Dendritic cell treated with granulocyte-macrophage colony-stimulating factor and Interleukin-4, amounts not matched to agents 40 ng/mL and 50 ng/mL, for 4 days (primary cell): ENCODE measurements at regions of chr10 and their contacts with region 1.

Region 1: GRCh38 chr10:75111367-75111906 is at the start of gene SAMD8:
- H3K4me3 Mint-ChIP-seq: peak within 1 kb of the TSS; percentile 97
- H3K27ac Mint-ChIP-seq: peak within 1 kb of the TSS; percentile 96
- H3K4me1 Mint-ChIP-seq: peaks cover 57% of the 10 kb centered on the region
- H3K27me3 Mint-ChIP-seq: no peaks in the 10 kb centered on the region

Region 2: GRCh38 chr10:74826142-74827044 is 285.0 kb before region 1 on chr10 and contains the start of gene KAT6B:
- intact Hi-C with region 1: loop called (anchors 1 kb)
- H3K4me3 Mint-ChIP-seq: peak within 1 kb of the TSS; percentile 92
- H3K27ac Mint-ChIP-seq: peak within 1 kb of the TSS; percentile 91
- H3K4me1 Mint-ChIP-seq: peaks cover 41% of the 10 kb centered on the region
- H3K27me3 Mint-ChIP-seq: peaks cover 8% of the 10 kb centered on the region

Region 3: GRCh38 chr10:75210282-75211006 is 99.0 kb after region 1 on chr10 and contains the start of gene VDAC2:
- intact Hi-C with region 1: loop called (anchors 1 kb)
- H3K4me3 Mint-ChIP-seq: peak within 1 kb of the TSS; percentile 97
- H3K27ac Mint-ChIP-seq: peak within 1 kb of the TSS; percentile 99
- H3K4me1 Mint-ChIP-seq: peaks cover 27% of the 10 kb centered on the region
- H3K27me3 Mint-ChIP-seq: no peaks in the 10 kb centered on the region

Region 4: GRCh38 chr10:75235375-75236177 is 124.1 kb after region 1 on chr10 and contains the start of gene COMTD1:
- intact Hi-C with region 1: loop called (anchors 2 kb)
- H3K4me3 Mint-ChIP-seq: peak within 1 kb of the TSS; percentile 83
- H3K27ac Mint-ChIP-seq: peak within 1 kb of the TSS; percentile 72
- H3K4me1 Mint-ChIP-seq: peaks cover 21% of the 10 kb centered on the region
- H3K27me3 Mint-ChIP-seq: no peaks in the 10 kb centered on the region